CD8-positive, alpha-beta T cell (primary cell): ENCODE measurements at regions of chr14 and their contacts with region 1.

Region 1: DNA sequence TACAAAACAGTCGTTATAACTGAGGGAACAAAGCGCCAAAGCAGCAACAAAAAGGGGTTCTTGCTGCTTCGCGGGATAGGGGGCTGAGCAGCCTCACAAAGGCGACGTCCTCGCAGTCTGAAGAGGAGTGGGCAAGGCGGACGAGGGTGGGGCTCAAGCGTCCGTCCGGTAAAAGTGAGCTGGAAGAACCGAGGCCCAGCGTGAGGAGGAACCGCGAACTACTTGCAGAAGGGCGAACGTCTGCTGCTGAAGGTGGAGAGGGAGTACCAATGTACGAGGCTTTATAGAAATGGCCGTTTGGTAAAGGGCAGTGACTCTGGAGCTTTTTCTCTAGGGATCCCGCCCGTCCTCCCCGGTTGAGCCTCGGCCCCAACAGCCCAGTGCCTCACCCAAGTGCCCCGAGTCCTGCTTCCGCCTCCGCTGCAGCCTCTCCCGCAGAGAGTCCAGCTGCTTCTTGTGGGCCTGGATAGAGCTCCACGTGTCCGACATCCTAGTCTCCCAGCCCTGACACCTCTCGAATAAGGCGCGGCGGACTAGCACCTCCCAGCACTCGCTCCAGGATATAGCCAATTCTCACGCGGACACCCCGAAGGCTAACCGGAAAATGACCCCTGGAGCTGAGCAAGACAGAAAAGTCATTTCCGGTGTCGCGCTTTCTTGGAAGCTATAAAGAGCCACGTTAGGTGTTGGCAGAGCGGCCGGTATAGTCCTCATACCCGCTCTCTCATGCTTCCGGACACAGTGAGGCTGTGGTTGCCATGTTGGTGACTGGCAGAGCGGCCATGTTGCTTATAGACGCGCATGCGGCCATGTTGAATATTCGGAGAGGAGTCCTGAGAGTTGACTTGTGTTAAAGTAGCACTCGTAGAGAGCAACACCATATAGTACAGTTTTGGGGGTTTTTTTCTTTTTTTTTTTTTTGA is at the start of gene METTL3:
- DNase-seq: peak; percentile 87 to 98 (median 92)
- ATAC-seq: peak; percentile 99
- H3K4me3 ChIP-seq: peak within 1 kb of the TSS; percentile 85 to 90
- H3K4me3 Mint-ChIP-seq: peak within 1 kb of the TSS; percentile 99
- H3K27ac ChIP-seq: peak within 1 kb of the TSS; percentile 88 to 89
- H3K27ac Mint-ChIP-seq: peak within 1 kb of the TSS; percentile 99
- H3K4me1 ChIP-seq: peaks cover 22% of the 10 kb centered on the region
- H3K4me1 Mint-ChIP-seq: peaks cover 39% of the 10 kb centered on the region
- H3K27me3 ChIP-seq: no peaks in the 10 kb centered on the region
- H3K27me3 Mint-ChIP-seq: no peaks in the 10 kb centered on the region
- CTCF ChIP-seq: no peak
- total RNA-seq, gene METTL3: 23.7 to 26.5 TPM

Region 2: DNA sequence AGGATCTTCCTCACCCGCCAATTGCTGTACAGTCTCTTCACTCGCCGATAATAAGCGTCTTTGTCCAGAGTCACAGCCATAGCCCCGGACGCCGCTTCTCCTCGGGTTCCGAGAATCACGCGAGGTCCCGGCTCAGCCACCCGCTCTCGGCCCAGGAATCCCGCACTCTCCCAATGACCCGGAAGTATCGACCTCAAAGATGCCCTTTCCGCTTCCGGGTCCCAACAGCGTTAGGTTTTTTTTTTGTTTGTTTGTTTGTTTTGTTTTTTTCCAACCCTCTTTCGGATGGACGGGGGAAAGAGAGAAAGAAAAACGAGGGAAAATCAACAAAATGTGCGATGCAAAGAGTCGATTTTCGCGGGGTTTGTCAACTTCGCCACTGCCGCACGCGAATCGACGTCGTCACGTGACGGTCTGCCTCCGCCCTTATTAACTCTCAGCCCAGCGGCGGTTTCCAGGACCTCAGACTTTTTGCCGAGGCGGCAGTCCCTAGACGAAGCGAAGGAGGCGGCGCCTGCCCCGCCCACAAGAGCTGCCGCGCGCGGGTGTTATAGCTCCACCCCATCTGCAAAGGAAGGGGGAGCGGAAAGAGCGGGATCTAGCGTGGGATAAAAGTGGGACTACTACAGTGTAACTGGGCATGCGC is 127.0 kb before region 1 on chr14 and contains the start of gene SUPT16H:
- CTCF ChIA-PET with region 1: no interaction called
- POLR2A ChIA-PET with region 1: no interaction called
- intact Hi-C with region 1: loop called (anchors 1 to 2 kb)
- DNase-seq: peak; percentile 83 to 97 (median 93)
- ATAC-seq: peak; percentile 88
- H3K4me3 ChIP-seq: peak within 1 kb of the TSS; percentile 87 to 91
- H3K4me3 Mint-ChIP-seq: peak within 1 kb of the TSS; percentile 98
- H3K27ac ChIP-seq: peak within 1 kb of the TSS; percentile 89 to 96
- H3K27ac Mint-ChIP-seq: peak within 1 kb of the TSS; percentile 99
- H3K4me1 ChIP-seq: peaks cover 17% of the 10 kb centered on the region
- H3K4me1 Mint-ChIP-seq: peaks cover 43% of the 10 kb centered on the region
- H3K27me3 ChIP-seq: no peaks in the 10 kb centered on the region
- H3K27me3 Mint-ChIP-seq: no peaks in the 10 kb centered on the region
- CTCF ChIP-seq: no peak
- total RNA-seq, gene SUPT16H: 53.5 to 54.9 TPM

Region 3: DNA sequence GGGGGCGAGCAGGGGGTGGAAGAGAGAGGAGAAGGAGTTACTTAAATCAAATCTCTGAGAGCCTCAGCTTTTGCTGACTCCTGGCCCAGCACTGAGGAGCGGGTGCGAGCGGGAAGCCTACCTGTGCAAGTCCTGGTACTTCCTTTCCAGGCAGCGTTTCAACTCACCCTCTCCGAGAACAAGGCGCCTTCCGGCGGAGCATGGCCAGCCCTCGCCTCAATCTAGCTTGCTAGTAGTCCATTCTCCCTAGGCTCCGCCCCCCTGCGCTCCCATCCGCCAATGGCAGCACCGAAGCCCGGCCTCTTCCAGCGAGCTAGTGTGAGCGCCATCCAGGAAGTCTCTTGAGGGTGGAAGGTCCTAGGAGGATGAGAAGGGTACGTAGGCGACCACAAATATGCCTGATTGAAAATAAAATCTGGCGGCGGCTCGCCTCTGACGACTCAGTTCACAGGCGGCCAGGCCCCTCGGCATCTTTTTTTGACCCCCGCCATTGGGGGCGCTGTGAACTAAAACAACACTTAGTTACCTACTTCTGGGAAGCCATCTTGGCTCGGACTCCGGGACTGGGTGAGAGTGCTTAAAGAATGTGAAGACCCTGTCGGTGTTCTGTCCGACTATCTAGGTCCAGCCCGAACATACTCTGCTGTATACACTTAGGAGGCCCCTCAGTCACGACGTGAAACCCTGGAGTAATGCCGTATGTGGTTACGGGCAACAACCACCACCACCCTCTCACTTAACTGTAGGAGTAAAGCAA is 54.9 kb before region 1 on chr14 and contains the start of gene CHD8:
- CTCF ChIA-PET with region 1: no interaction called
- POLR2A ChIA-PET with region 1: interaction called, 9 read pairs
- intact Hi-C with region 1: loop called (anchors 1 kb)
- DNase-seq: peak; percentile 98 to 100 (median 99)
- ATAC-seq: peak; percentile 96
- H3K4me3 ChIP-seq: peak within 1 kb of the TSS; percentile 85 to 97
- H3K4me3 Mint-ChIP-seq: peak within 1 kb of the TSS; percentile 100
- H3K27ac ChIP-seq: peak within 1 kb of the TSS; percentile 86 to 98
- H3K27ac Mint-ChIP-seq: peak within 1 kb of the TSS; percentile 100
- H3K4me1 ChIP-seq: peaks cover 21% of the 10 kb centered on the region
- H3K4me1 Mint-ChIP-seq: peaks cover 36% of the 10 kb centered on the region
- H3K27me3 ChIP-seq: no peaks in the 10 kb centered on the region
- H3K27me3 Mint-ChIP-seq: no peaks in the 10 kb centered on the region
- CTCF ChIP-seq: peak; percentile 60
- total RNA-seq, gene CHD8: 132 to 144 TPM

Region 4: DNA sequence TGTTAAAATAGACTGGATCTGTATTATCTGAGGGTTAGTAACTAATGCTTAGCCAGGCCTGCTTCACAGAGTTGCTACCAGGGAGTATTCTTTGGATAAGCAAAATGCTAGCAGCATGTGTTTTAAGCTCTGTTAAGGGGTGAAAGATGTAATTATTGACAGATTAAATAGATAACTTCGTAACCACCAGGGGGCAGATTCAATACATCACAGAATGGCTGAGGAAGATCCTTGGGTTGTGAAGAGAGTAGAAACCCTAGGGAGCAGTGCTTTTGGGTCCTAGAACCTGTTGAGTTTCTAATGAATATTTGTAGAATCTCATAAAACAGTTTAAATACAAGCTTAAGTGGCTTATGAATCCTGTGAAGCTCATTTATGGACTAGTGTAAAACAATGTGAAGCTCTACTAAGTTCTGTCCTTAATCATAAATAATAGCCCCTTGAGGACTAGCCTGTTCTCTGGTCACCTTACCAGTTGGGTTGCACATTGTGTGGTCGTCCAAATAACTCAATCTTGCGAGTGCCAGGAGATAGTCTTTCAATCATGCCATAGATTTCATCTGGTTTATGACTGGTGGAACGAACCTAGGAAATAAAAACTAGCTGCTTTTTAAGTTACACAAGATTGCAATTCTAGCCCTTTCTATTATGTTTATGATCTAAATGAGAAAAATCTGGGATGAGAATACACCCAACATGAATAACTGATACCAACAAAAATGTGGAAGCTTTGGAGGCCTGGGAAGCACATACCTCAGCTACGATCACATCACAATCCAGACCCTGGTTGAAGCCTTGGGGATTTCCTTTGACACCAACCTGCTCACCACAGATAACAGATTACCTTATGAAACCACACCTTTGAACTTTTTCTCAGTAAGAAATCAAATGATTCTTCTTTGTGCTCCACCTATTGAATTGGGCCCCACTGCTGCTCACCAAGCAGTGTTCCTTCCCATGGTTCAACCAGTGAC is 12.2 kb before region 1 on chr14:
- CTCF ChIA-PET with region 1: interaction called, 19 read pairs
- POLR2A ChIA-PET with region 1: interaction called, 14 read pairs
- intact Hi-C with region 1: no loop called
- DNase-seq: peak in 3 of 9 experiments; percentile 47 to 76 (median 67)
- ATAC-seq: peak; percentile 77
- H3K4me3 ChIP-seq: no peak overlapping the region
- H3K4me3 Mint-ChIP-seq: no peak overlapping the region
- H3K27ac ChIP-seq: peak overlapping the region; percentile 6 to 23
- H3K27ac Mint-ChIP-seq: peak overlapping the region; percentile 73
- H3K4me1 ChIP-seq: peaks cover 13% of the 10 kb centered on the region
- H3K4me1 Mint-ChIP-seq: peaks cover 19% of the 10 kb centered on the region
- H3K27me3 ChIP-seq: no peaks in the 10 kb centered on the region
- H3K27me3 Mint-ChIP-seq: no peaks in the 10 kb centered on the region
- CTCF ChIP-seq: peak; percentile 70

Region 5: GRCh38 chr14:22589096-22589839 is 1078.3 kb after region 1 on chr14 and contains the start of gene DAD1:
- CTCF ChIA-PET with region 1: no interaction called
- POLR2A ChIA-PET with region 1: no interaction called
- intact Hi-C with region 1: loop called in 1 of 2 experiments (anchors 2 kb)
- DNase-seq: peak; percentile 99 to 100 (median 100)
- ATAC-seq: peak; percentile 86
- H3K4me3 ChIP-seq: peak within 1 kb of the TSS; percentile 64 to 67
- H3K4me3 Mint-ChIP-seq: peak within 1 kb of the TSS; percentile 98
- H3K27ac ChIP-seq: peak within 1 kb of the TSS; percentile 95 to 99
- H3K27ac Mint-ChIP-seq: peak within 1 kb of the TSS; percentile 100
- H3K4me1 ChIP-seq: peaks cover 47% of the 10 kb centered on the region
- H3K4me1 Mint-ChIP-seq: peaks cover 49% of the 10 kb centered on the region
- H3K27me3 ChIP-seq: no peaks in the 10 kb centered on the region
- H3K27me3 Mint-ChIP-seq: no peaks in the 10 kb centered on the region
- CTCF ChIP-seq: no peak
- total RNA-seq, gene DAD1: 27.2 to 35.6 TPM